ENCODE measurements at regions of chr22 and their contacts with region 1.

Region 1: DNA sequence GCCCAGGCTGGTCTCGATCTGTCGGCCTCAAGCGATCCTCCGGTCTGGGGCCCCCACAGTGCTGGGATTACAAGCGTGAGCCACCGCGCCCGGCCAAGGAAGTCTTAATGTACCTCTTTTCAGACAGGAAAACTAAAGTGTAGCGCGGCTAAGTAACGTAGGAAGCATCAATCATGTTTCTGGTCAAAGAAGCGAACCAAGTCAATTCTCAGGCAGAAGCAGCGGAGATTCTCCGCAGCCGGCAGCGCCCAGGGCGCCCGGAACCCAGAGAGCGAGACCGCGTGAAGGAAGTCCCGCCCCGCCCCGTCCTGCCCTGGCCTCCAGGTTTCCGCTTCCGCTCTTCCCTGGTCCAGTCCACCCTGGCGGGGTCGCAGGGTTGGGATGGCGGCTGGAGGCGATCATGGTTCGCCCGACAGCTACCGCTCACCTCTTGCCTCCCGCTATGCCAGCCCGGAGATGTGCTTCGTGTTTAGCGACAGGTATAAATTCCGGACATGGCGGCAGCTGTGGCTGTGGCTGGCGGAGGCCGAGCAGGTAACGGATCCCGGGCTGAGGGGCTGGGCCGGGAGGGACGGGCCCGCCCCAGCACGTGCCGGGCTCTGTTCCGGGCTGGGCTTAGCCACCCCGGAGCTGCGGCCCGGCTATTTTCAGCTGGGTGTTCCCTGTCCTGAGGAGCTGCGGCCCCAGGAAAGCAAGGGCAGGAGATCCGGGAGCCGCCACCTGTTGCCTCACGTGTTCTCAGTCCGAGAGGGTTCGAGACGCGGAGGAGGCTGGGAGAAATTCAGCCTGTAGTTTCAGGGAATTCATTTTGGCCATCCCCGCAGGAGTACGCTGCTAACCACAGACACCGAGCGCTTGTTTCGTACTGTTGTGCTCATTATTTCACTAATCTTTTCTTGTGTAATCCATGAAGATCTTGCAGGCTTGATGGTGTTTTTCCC is at the start of gene ADSL:
- DNase-seq: peak; percentile 94
- ATAC-seq: peak; percentile 87
- H3K4me3 Mint-ChIP-seq: peak within 1 kb of the TSS; percentile 86
- H3K27ac Mint-ChIP-seq: peak within 1 kb of the TSS; percentile 92
- H3K4me1 Mint-ChIP-seq: peaks cover 45% of the 10 kb centered on the region
- H3K27me3 Mint-ChIP-seq: no peaks in the 10 kb centered on the region
- total RNA-seq, gene ADSL: 125 to 172 TPM

Region 2: DNA sequence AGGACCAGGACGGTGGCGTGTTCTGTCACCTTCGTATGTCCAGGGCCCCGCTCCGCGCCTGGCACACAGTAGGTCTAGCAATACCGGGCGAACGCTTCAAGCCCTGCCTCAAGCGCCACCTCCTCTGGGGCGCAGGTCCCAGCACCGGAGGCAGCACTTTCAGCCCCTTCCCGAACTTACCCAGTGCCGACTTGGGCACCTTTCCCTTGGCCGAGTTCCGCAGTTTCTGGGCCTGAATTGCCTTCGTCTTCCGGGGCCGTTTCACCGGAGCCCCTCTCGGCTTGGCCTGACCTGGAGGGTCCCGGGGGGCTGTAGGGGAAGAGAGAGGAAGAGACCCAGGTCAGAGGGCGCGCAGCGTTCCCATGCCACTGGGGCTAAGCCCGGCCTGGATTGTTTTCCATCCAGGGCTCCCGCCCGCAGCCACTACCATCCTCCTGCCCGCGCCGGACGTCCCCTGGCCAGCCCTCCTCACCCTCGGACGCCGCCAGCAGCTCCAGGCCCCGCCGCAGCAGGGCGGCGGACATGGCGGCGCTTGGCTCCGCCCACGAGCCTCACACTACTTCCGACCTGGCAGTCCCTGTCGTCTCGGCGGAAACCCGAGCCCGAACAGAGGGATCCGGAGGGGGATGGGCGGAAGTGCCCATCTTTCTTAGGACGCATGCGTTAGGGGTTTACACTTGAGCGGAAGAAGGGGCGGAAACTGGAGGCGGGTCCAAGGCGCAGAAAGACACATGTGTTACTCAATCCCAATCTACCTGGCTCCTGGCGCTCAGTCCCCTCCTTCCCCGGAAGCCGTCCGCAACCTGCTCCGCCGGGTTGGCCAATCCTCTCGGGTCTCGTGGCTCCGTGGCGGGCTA is 814.0 kb before region 1 on chr22 and contains the start of gene RPS19BP1:
- CTCF ChIA-PET with region 1: interaction called, 7 read pairs
- POLR2A ChIA-PET with region 1: no interaction called
- intact Hi-C with region 1: loop called (anchors 1 to 5 kb)
- DNase-seq: peak; percentile 100
- ATAC-seq: peak; percentile 89
- H3K4me3 Mint-ChIP-seq: peak within 1 kb of the TSS; percentile 98
- H3K27ac Mint-ChIP-seq: peak within 1 kb of the TSS; percentile 92
- H3K4me1 Mint-ChIP-seq: peaks cover 51% of the 10 kb centered on the region
- H3K27me3 Mint-ChIP-seq: no peaks in the 10 kb centered on the region
- total RNA-seq, gene RPS19BP1: 42.8 to 68.8 TPM

Region 3: DNA sequence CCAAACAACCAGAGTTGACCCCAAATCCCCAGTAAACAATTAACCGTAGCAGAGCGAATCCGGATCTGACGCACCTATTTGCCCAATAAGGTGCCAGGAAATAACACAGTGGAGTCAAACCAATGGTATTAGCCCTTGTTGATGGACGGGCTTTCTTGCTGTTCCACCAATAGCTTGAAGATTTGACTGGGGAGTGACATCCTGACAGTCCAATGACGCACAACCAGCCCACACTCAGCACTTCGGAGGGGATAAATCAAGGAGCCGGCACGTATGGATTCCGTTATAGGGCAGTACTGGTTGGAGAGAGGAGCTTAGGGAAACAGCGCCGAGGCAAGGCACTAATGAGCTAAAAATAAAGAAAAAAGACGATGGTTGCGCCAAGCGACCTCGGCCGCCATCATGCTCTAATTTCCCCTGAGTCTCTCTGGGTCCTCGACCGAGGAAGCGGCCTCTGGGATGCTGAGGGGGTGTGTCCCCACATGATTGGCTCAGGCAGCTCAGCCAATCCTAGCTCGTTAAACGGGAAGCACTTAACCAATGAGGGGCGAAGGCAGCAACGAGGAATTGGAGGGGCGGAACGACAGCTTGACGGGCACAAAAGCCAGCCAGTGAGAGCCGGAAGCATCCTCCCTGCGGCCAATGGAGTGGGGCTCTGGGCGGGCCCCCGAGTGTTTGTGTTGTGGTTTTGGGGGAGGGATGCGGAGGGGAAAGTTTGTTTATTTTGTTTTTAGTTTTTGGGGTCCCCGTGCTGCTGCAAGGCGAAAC is 302.2 kb before region 1 on chr22:
- CTCF ChIA-PET with region 1: interaction called, 20 read pairs
- POLR2A ChIA-PET with region 1: interaction called, 29 read pairs
- intact Hi-C with region 1: loop called (anchors 1 kb)
- DNase-seq: peak; percentile 98
- ATAC-seq: peak; percentile 91
- H3K4me3 Mint-ChIP-seq: peak overlapping the region; percentile 87
- H3K27ac Mint-ChIP-seq: peak overlapping the region; percentile 99
- H3K4me1 Mint-ChIP-seq: peaks cover 24% of the 10 kb centered on the region
- H3K27me3 Mint-ChIP-seq: peaks cover 2% of the 10 kb centered on the region

Region 4: GRCh38 chr22:40193429-40194421 is 152.7 kb before region 1 on chr22:
- CTCF ChIA-PET with region 1: interaction called, 5 read pairs
- POLR2A ChIA-PET with region 1: interaction called, 6 read pairs
- intact Hi-C with region 1: loop called in 1 of 2 experiments (anchors 1 kb)
- DNase-seq: no peak
- ATAC-seq: no peak
- H3K4me3 Mint-ChIP-seq: no peak overlapping the region
- H3K27ac Mint-ChIP-seq: peak overlapping the region; percentile 72
- H3K4me1 Mint-ChIP-seq: peaks cover 86% of the 10 kb centered on the region
- H3K27me3 Mint-ChIP-seq: no peaks in the 10 kb centered on the region

Region 5: DNA sequence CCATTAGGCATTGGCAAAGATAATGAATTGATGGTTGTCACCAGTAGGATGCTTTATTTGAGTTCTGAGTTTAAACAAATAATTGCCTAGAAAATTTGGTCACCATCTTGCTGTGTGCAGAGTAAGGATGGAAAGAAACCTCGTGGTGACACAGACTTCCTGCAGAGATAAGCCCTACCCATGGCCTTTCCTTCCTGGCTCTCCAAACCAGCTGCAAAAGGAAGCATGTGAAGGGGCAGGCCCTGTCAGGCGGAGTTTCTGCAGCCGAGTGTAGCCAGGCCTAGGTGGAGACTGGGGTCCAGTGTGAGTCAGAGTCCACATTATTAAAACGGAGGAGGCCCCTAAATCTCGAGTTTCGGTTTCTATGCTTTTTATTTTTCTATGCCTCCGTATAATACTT is 83.3 kb before region 1 on chr22:
- CTCF ChIA-PET with region 1: interaction called, 10 read pairs
- POLR2A ChIA-PET with region 1: no interaction called
- intact Hi-C with region 1: no loop called
- DNase-seq: no peak
- ATAC-seq: no peak
- H3K4me3 Mint-ChIP-seq: no peak overlapping the region
- H3K27ac Mint-ChIP-seq: no peak overlapping the region
- H3K4me1 Mint-ChIP-seq: peaks cover 61% of the 10 kb centered on the region
- H3K27me3 Mint-ChIP-seq: no peaks in the 10 kb centered on the region

Region 6: GRCh38 chr22:40332319-40332781 is 14.1 kb before region 1 on chr22:
- CTCF ChIA-PET with region 1: interaction called, 12 read pairs
- POLR2A ChIA-PET with region 1: interaction called, 4 read pairs
- intact Hi-C with region 1: no loop called
- DNase-seq: peak; percentile 37
- ATAC-seq: peak; percentile 55
- H3K4me3 Mint-ChIP-seq: peak overlapping the region; percentile 59
- H3K27ac Mint-ChIP-seq: peak overlapping the region; percentile 84
- H3K4me1 Mint-ChIP-seq: peaks cover 90% of the 10 kb centered on the region
- H3K27me3 Mint-ChIP-seq: no peaks in the 10 kb centered on the region

Region 7: GRCh38 chr22:40463017-40463631 is 116.7 kb after region 1 on chr22:
- CTCF ChIA-PET with region 1: no interaction called
- POLR2A ChIA-PET with region 1: no interaction called
- intact Hi-C with region 1: no loop called
- DNase-seq: peak; percentile 74
- ATAC-seq: peak; percentile 84
- H3K4me3 Mint-ChIP-seq: peak overlapping the region; percentile 87
- H3K27ac Mint-ChIP-seq: peak overlapping the region; percentile 91
- H3K4me1 Mint-ChIP-seq: peaks cover 65% of the 10 kb centered on the region
- H3K27me3 Mint-ChIP-seq: no peaks in the 10 kb centered on the region

Region 8: DNA sequence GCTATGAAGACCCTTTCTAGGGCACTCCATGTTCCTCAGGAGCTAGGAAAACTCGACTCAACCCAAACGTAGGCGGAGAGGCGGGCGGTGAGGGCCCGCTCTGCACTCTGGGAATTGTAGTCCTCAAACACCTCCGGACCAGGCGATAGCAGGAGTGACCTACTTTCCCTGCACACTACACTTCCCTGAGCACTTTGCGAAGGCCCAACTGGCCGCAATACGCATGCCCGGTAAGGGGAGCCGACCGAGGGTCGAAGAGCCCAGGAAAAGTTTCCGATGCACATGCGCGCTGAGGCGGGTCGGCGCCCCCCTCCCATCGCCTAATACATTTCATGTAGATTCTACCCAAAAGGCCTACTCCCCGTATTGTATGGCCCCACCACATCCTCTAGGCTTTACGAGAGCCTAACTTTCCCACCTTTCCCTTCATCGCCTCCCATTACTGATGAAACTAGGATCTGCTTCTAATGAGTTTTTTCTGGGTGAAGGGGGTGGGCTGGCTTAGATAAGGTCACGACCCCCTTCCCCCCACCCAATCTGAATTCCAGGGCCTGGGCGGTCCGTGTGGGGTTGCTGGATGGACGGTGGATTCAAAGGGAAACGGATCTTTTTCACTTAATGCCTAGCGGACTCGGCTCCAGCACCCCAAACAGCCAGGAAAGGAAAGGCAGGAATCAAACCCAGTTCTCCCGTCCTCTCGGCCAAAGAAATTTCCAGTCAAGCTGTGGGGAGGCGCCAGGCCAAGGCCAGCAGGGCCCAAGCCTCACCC is 1098.1 kb after region 1 on chr22:
- CTCF ChIA-PET with region 1: no interaction called
- POLR2A ChIA-PET with region 1: no interaction called
- intact Hi-C with region 1: no loop called
- DNase-seq: peak; percentile 93
- ATAC-seq: peak; percentile 62
- H3K4me3 Mint-ChIP-seq: peak overlapping the region; percentile 86
- H3K27ac Mint-ChIP-seq: peak overlapping the region; percentile 90
- H3K4me1 Mint-ChIP-seq: peaks cover 17% of the 10 kb centered on the region
- H3K27me3 Mint-ChIP-seq: no peaks in the 10 kb centered on the region

Measured in activated CD4-positive, alpha-beta T cell treated with anti-CD3 and anti-CD28 coated beads for 36 hours (primary cell).